Activated B cell treated with CpG ODN at 0.5 μM for 24 hours (primary cell): ENCODE measurements at regions of chr14 and their contacts with region 1.

Region 1: DNA sequence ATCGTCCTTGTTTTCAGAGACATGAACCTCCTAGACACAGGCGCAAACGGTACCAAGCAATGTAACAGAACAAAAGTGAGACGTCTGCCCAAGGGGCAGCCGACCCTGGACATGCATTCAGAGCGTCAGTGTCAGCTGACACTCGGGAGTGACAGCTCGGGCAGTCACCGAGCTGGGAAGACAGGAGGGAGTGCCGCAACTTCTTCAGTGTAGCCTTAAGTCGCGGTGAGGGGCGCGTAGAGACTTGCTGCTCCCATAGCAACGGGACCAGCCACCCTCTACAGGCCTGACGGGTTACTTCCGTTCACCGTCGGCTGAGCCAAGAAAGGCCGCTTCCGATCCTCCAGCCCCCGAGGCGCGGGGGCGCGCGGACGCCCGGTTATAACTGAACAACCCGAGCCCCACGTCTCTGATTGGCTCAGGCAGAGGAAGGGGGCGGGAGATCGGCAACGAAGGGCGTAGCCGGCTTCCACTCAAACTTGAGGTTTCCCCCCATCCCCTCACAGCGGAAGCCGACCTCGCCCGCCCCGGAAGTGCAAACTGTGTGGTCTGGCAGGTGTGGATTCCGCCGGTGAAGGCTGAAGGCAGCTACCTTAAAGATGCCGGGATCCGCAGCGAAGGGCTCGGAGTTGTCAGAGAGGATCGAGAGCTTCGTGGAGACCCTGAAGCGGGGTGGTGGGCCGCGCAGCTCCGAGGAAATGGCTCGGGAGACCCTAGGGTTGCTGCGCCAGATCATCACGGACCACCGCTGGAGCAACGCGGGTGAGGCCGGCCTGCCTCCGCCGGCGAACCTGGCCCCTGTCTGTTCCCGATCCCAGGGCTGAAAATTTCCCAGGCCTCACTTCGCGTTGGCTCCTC is at the start of gene EIF2B2:
- DNase-seq: peak; percentile 97
- ATAC-seq: peak; percentile 96
- H3K4me3 Mint-ChIP-seq: peak within 1 kb of the TSS; percentile 99
- H3K27ac Mint-ChIP-seq: peak within 1 kb of the TSS; percentile 96
- H3K4me1 Mint-ChIP-seq: peaks cover 25% of the 10 kb centered on the region
- H3K27me3 Mint-ChIP-seq: no peaks in the 10 kb centered on the region
- CTCF ChIP-seq: no peak
- total RNA-seq, gene EIF2B2: 36.6 and 37.2 TPM in 2 replicates

Region 2: DNA sequence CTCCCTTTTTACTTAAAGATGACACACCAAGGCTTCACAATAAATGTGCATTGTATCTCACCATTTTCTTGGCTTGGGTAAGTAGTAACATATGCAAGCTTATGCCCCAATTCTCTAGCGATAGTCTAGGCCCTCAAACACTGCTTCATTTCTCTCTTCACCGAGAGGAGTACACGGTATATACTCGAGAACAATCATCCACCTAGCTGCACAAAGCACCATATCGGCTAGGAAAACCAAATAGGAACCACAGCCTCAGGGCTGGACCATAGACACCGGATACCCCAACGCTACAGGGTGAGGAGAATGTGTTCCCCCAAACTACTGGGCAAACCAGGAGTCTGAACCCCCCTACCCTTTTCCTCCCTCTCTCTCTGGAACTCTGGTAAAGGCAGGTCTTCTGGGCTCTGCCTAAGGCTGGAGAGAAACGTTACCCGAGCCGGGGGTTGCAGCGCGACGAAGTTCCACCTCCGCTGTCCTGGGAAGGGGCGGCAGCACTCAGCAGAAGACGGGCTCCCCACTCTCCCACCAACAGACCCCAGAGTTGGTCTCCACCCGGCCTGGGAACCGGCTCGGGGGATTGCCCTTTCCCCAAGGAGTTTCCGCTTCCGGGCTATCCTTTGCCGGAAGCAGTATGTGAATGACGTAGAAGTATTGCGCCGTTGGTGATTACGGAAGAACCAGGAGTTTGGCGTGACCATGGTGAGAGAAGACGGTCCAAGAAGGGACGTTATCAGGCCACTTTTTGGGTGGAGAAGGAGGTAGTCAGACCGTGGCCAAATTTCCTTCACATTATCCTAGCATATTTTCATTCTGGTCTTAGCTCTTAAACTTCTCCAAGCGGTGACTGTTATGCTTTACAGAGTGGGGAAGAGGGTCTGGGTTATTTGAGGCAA is 289.9 kb before region 1 on chr14 and contains the starts of genes AREL1 and FCF1:
- CTCF ChIA-PET with region 1: no interaction called
- POLR2A ChIA-PET with region 1: no interaction called
- intact Hi-C with region 1: loop called (anchors 1 kb)
- DNase-seq: peak; percentile 69
- ATAC-seq: peak; percentile 90
- H3K4me3 Mint-ChIP-seq: peak within 1 kb of the TSS; percentile 95
- H3K27ac Mint-ChIP-seq: peak within 1 kb of the TSS; percentile 92
- H3K4me1 Mint-ChIP-seq: peaks cover 49% of the 10 kb centered on the region
- H3K27me3 Mint-ChIP-seq: no peaks in the 10 kb centered on the region
- CTCF ChIP-seq: no peak
- total RNA-seq, gene AREL1: 46.5 and 49.7 TPM in 2 replicates
- total RNA-seq, gene FCF1: 49.4 and 49.5 TPM in 2 replicates

Region 3: DNA sequence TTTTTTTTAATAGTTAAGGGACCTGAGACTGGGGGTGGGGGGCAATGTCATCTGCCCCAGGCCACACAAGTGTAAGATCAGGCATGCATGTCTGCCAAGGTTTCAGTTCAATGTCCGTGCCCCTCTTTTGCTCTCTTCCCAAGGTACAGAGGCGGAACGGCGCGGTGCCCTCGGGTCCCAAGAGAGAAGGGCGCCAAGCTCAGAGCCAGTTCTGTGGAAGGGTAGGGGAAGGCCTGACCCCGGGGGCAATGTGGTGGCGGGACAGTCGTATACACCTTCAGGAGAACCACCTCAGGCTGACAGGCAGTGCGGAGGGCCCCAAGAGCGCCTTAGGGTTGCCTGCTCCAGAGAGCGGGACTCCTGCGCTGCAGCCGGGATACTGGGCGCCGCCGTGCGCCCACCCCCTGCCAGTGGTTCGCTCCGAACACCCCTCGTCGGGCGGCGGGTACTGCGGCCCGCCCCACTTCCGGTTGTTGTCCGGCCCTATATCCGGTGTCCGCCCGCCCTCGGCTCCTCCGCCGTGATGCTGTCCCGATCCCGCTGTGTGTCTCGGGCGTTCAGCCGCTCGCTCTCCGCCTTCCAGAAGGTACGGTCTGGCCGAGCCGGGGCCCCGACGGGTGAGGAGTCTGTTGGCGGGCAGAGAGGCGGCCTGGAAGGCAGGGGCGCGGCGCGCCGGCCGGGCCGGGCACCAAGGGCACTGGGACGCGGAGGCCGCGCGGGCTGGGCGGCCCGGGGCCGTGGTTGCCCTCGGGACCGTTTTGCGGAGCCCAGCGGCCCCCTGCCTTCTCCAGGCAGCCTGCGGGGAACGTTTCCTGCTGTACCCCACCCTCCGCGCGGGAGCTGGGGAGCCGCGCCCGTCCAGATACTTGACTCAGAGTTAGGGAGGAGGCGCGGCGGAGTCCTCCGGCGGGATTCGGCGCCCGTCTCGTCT is 120.9 kb before region 1 on chr14 and contains the start of gene DLST:
- CTCF ChIA-PET with region 1: no interaction called
- POLR2A ChIA-PET with region 1: no interaction called
- intact Hi-C with region 1: loop called (anchors 2 kb)
- DNase-seq: peak; percentile 88
- ATAC-seq: peak; percentile 86
- H3K4me3 Mint-ChIP-seq: peak within 1 kb of the TSS; percentile 99
- H3K27ac Mint-ChIP-seq: peak within 1 kb of the TSS; percentile 97
- H3K4me1 Mint-ChIP-seq: peaks cover 51% of the 10 kb centered on the region
- H3K27me3 Mint-ChIP-seq: no peaks in the 10 kb centered on the region
- CTCF ChIP-seq: no peak
- total RNA-seq, gene DLST: 73.1 and 90.4 TPM in 2 replicates

Region 4: GRCh38 chr14:74945823-74946682 is 56.6 kb before region 1 on chr14:
- CTCF ChIA-PET with region 1: interaction called, 5 read pairs
- POLR2A ChIA-PET with region 1: no interaction called
- intact Hi-C with region 1: loop called (anchors 1 kb)
- DNase-seq: peak; percentile 61
- ATAC-seq: peak; percentile 67
- H3K4me3 Mint-ChIP-seq: no peak overlapping the region
- H3K27ac Mint-ChIP-seq: peak overlapping the region; percentile 46
- H3K4me1 Mint-ChIP-seq: peaks cover 34% of the 10 kb centered on the region
- H3K27me3 Mint-ChIP-seq: peaks cover 2% of the 10 kb centered on the region
- CTCF ChIP-seq: no peak

Region 5: GRCh38 chr14:75050852-75051554 is 48.4 kb after region 1 on chr14 and contains the start of gene MLH3:
- CTCF ChIA-PET with region 1: no interaction called
- POLR2A ChIA-PET with region 1: no interaction called
- intact Hi-C with region 1: loop called (anchors 2 kb)
- DNase-seq: peak; percentile 75
- ATAC-seq: peak; percentile 80
- H3K4me3 Mint-ChIP-seq: peak within 1 kb of the TSS; percentile 92
- H3K27ac Mint-ChIP-seq: peak within 1 kb of the TSS; percentile 83
- H3K4me1 Mint-ChIP-seq: peaks cover 19% of the 10 kb centered on the region
- H3K27me3 Mint-ChIP-seq: no peaks in the 10 kb centered on the region
- CTCF ChIP-seq: no peak
- total RNA-seq, gene MLH3: 20.0 and 21.7 TPM in 2 replicates

Region 6: GRCh38 chr14:75454963-75455945 is 452.6 kb after region 1 on chr14:
- CTCF ChIA-PET with region 1: no interaction called
- POLR2A ChIA-PET with region 1: no interaction called
- intact Hi-C with region 1: no loop called
- DNase-seq: no peak
- ATAC-seq: no peak
- H3K4me3 Mint-ChIP-seq: no peak overlapping the region
- H3K27ac Mint-ChIP-seq: no peak overlapping the region
- H3K4me1 Mint-ChIP-seq: peaks cover 16% of the 10 kb centered on the region
- H3K27me3 Mint-ChIP-seq: no peaks in the 10 kb centered on the region
- CTCF ChIP-seq: no peak